HCT116 (cell line): ENCODE measurements at regions of chr7 and their contacts with region 1.

Region 1: DNA sequence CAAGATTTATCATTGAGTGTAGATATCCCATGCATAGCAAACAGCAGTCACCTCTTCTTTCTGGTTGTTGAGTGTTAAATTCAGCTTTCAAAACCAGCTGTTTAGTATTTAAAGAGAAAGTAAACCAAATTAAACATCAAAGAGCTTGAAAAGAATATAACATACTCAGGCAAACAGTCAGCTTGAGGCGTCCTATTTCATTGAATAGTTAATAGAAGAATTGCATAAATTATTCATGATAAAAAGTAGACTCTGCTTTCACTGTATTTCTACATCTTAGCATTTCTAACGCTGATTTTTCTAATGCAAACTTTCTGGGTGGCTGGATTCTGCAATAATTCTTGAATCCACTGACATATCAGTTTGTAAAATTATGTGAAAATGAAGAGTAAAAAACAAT is 464.5 kb upstream of the LRRN3 start:
- DNase-seq: no peak
- ATAC-seq: no peak
- H3K4me3 ChIP-seq: no peak overlapping the region
- H3K27ac ChIP-seq: no peak overlapping the region
- H3K4me1 ChIP-seq: no peaks in the 10 kb centered on the region
- H3K27me3 ChIP-seq: no peaks in the 10 kb centered on the region
- CTCF ChIP-seq: no peak
- POLR2A ChIP-seq: no peak
- RAD21 ChIP-seq: no peak

Region 2: GRCh38 chr7:109984729-109985128 is 641.7 kb before region 1 on chr7:
- CTCF ChIA-PET with region 1: no interaction called
- POLR2A ChIA-PET with region 1: no interaction called
- RAD21 ChIA-PET with region 1: no interaction called
- intact Hi-C with region 1: no loop called
- DNase-seq: no peak
- ATAC-seq: no peak
- H3K4me3 ChIP-seq: no peak overlapping the region
- H3K27ac ChIP-seq: no peak overlapping the region
- H3K4me1 ChIP-seq: peaks cover 0 to 8% of the 10 kb centered on the region in 2 experiments; a peak in 2 of 4 replicates
- H3K27me3 ChIP-seq: no peaks in the 10 kb centered on the region
- CTCF ChIP-seq: no peak
- POLR2A ChIP-seq: no peak
- RAD21 ChIP-seq: no peak

Region 3: GRCh38 chr7:110664803-110665202 is 38.4 kb after region 1 on chr7:
- CTCF ChIA-PET with region 1: no interaction called
- POLR2A ChIA-PET with region 1: no interaction called
- RAD21 ChIA-PET with region 1: no interaction called
- intact Hi-C with region 1: loop called (anchors 1 kb)
- DNase-seq: no peak
- ATAC-seq: no peak
- H3K4me3 ChIP-seq: no peak overlapping the region
- H3K27ac ChIP-seq: no peak overlapping the region
- H3K4me1 ChIP-seq: no peaks in the 10 kb centered on the region
- H3K27me3 ChIP-seq: no peaks in the 10 kb centered on the region
- CTCF ChIP-seq: no peak
- POLR2A ChIP-seq: no peak
- RAD21 ChIP-seq: no peak